Activated naive CD4-positive, alpha-beta T cell treated with anti-CD3 and anti-CD28 coated beads, Interleukin-2, amount 10 ng/mL, durations not matched to agents 7 days and 5 days (primary cell): ENCODE measurements at regions of chr16 and their contacts with region 1.

Region 1: DNA sequence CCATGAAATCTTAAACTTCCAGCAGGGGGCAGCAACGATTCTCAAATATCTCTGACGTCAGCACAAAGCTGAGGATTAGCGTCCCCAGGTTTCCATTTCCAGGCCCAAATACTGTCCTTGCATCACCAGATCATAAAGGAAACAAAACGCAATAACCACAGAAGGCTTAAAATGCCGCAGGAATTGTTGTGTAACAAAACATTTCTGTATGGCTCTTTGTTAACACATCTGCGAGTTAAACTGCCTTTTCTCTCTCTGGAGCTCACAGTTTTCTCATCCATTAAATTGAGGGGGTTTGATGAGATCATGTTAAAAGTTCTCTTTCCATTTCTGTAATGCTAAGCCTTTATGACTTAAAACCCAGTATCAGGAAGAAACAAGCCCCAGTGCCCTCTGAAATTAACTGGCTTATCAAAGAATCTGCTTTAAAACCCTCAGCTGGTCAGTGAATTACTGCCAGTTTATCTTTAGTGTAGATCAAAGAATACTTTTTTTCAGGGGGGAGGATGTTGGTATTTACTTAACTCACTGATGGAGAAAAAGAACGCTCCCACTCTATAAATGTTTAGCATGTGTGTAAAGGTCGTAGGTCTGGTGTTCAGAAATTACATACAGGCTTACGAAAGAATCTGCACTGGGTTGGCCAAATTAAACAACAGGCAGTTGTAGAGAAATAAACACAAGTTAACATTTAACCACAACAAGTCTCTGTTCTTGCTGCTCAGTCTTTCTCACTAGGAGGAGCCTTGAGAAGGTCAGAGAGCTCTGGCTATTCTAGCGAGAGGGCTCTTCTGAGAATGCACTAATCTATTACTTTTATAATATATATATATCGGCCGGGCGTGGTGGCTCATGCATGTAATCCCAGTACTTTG is 10.6 kb upstream of the TERF2 start:
- DNase-seq: peak; percentile 78
- H3K4me3 Mint-ChIP-seq: no peak overlapping the region
- H3K27ac Mint-ChIP-seq: no peak overlapping the region
- H3K4me1 Mint-ChIP-seq: peaks cover 7% of the 10 kb centered on the region
- H3K27me3 Mint-ChIP-seq: peaks cover 34% of the 10 kb centered on the region

Region 2: GRCh38 chr16:69171325-69172084 is 224.9 kb before region 1 on chr16:
- CTCF ChIA-PET with region 1: no interaction called
- DNase-seq: no peak
- H3K4me3 Mint-ChIP-seq: no peak overlapping the region
- H3K27ac Mint-ChIP-seq: no peak overlapping the region
- H3K4me1 Mint-ChIP-seq: peaks cover 18% of the 10 kb centered on the region
- H3K27me3 Mint-ChIP-seq: no peaks in the 10 kb centered on the region

Region 3: GRCh38 chr16:69378760-69379159 is 17.7 kb before region 1 on chr16:
- CTCF ChIA-PET with region 1: no interaction called
- DNase-seq: no peak
- H3K4me3 Mint-ChIP-seq: no peak overlapping the region
- H3K27ac Mint-ChIP-seq: no peak overlapping the region
- H3K4me1 Mint-ChIP-seq: peaks cover 17% of the 10 kb centered on the region
- H3K27me3 Mint-ChIP-seq: no peaks in the 10 kb centered on the region

Region 4: GRCh38 chr16:69563605-69564580 is 167.5 kb after region 1 on chr16:
- CTCF ChIA-PET with region 1: interaction called, 12 read pairs
- DNase-seq: peak; percentile 49
- H3K4me3 Mint-ChIP-seq: peak overlapping the region; percentile 90
- H3K27ac Mint-ChIP-seq: peak overlapping the region; percentile 95
- H3K4me1 Mint-ChIP-seq: peaks cover 39% of the 10 kb centered on the region
- H3K27me3 Mint-ChIP-seq: no peaks in the 10 kb centered on the region